ENCODE measurements at regions of chr17 and their contacts with region 1.

Region 1: DNA sequence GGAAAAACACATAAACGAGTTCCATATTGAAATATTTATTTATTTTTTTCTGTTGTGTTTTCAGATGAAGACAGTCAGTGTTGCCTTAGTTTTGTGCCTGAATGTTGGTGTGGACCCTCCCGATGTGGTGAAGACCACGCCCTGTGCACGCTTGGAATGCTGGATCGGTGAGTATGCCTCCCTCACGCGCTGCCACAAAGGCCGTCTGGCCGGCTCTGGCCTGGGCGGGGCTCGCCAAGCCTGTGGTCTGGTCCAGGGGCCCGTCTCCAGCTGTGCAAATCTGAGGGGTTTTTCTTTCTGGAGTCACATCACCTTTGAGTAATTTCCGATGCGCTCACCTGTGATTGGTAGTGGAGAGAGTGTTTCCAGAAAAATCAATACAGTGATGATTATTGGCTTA is 81.0 kb downstream of the RPTOR start:
- DNase-seq: no peak
- H3K4me3 ChIP-seq: no peak overlapping the region
- CTCF ChIP-seq: no peak
- POLR2A ChIP-seq: no peak

Region 2: GRCh38 chr17:80591788-80592187 is 33.8 kb before region 1 on chr17:
- intact Hi-C with region 1: loop called (anchors 2 kb)
- DNase-seq: peak in 1 of 2 donors; percentile 3
- H3K4me3 ChIP-seq: no peak overlapping the region
- CTCF ChIP-seq: no peak
- POLR2A ChIP-seq: no peak

Region 3: GRCh38 chr17:80704381-80704819 is 78.8 kb after region 1 on chr17:
- intact Hi-C with region 1: no loop called
- DNase-seq: no peak
- H3K4me3 ChIP-seq: no peak overlapping the region
- CTCF ChIP-seq: no peak
- POLR2A ChIP-seq: no peak